ENCODE measurements at regions of chr3 and their contacts with region 1.

Region 1: GRCh38 chr3:50611464-50612233 is at the start of gene CISH:
- DNase-seq: peak; percentile 90 to 94 (median 93)
- H3K4me3 ChIP-seq: peak within 1 kb of the TSS; percentile 93 to 96
- H3K4me3 Mint-ChIP-seq: peak within 1 kb of the TSS; percentile 92 to 99 (median 96)
- H3K27ac ChIP-seq: peak within 1 kb of the TSS; percentile 81
- H3K27ac Mint-ChIP-seq: peak within 1 kb of the TSS; percentile 90 to 97 (median 94)
- H3K4me1 ChIP-seq: peaks cover 66% of the 10 kb centered on the region
- H3K4me1 Mint-ChIP-seq: peaks cover 44 to 80% (median 63%) of the 10 kb centered on the region in 4 donors
- H3K27me3 ChIP-seq: no peaks in the 10 kb centered on the region
- H3K27me3 Mint-ChIP-seq: no peaks in the 10 kb centered on the region
- total RNA-seq, gene CISH: 14.7 to 15.2 TPM

Region 2: GRCh38 chr3:50418850-50419249 is 192.8 kb before region 1 on chr3:
- CTCF ChIA-PET with region 1: no interaction called
- POLR2A ChIA-PET with region 1: no interaction called
- intact Hi-C with region 1: no loop called
- DNase-seq: no peak
- H3K4me3 ChIP-seq: no peak overlapping the region
- H3K4me3 Mint-ChIP-seq: no peak overlapping the region
- H3K27ac ChIP-seq: no peak overlapping the region
- H3K27ac Mint-ChIP-seq: peak overlapping the region in 1 of 7 donors; percentile 53
- H3K4me1 ChIP-seq: no peaks in the 10 kb centered on the region
- H3K4me1 Mint-ChIP-seq: peaks cover 0 to 6% (median 3%) of the 10 kb centered on the region in 4 donors
- H3K27me3 ChIP-seq: no peaks in the 10 kb centered on the region
- H3K27me3 Mint-ChIP-seq: no peaks in the 10 kb centered on the region

Region 3: GRCh38 chr3:50519471-50520089 is 92.1 kb before region 1 on chr3:
- CTCF ChIA-PET with region 1: interaction called, 28 read pairs
- POLR2A ChIA-PET with region 1: no interaction called
- intact Hi-C with region 1: loop called (anchors 1 kb)
- DNase-seq: peak; percentile 58 to 68 (median 66)
- H3K4me3 ChIP-seq: no peak overlapping the region
- H3K4me3 Mint-ChIP-seq: no peak overlapping the region
- H3K27ac ChIP-seq: no peak overlapping the region
- H3K27ac Mint-ChIP-seq: peak overlapping the region in 1 of 7 donors; percentile 17
- H3K4me1 ChIP-seq: peaks cover 4% of the 10 kb centered on the region
- H3K4me1 Mint-ChIP-seq: peaks cover 3 to 10% (median 5%) of the 10 kb centered on the region in 4 donors
- H3K27me3 ChIP-seq: no peaks in the 10 kb centered on the region
- H3K27me3 Mint-ChIP-seq: peaks cover 0 to 5% of the 10 kb centered on the region in 2 donors

Region 4: DNA sequence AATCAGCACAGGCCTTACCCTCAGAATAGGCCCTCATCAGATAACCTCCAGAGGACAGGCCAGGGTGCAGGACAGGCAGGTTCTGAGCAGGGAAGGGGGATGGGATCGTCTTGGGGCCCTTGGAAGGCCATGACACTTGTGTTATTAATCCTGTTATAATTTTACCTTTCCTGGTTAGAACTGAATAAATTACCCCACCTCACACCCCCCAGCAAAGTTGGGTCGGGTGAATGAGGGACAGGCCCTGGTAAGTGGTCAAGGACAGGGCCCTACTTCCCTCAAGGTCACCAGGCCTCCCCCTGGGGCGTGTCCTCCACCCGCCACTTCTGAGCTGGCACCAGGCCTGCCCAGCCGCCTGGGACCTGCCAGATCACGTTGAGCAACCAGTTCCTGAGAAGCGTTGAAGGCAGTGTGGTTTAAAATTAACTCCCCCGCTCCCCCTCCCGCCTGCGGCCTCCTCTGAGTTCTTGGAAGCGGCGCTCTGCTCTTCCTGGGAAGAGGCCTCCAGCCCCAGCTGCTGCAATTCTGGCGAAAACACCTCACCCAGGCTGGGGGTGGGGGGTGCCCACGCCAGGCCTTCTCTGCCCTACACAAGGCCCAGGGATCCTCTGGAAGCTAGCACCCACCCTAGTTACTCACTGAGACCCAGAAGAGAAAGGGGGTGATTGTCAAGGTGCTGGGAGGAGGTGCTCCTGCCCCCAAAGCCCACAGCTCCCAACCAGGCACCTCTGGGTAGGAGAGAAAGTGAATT is 10.6 kb before region 1 on chr3:
- CTCF ChIA-PET with region 1: interaction called, 149 read pairs
- POLR2A ChIA-PET with region 1: interaction called, 156 read pairs
- intact Hi-C with region 1: loop called (anchors 1 kb)
- DNase-seq: peak; percentile 62 to 80 (median 65)
- H3K4me3 ChIP-seq: peak overlapping the region in 1 of 2 donors; percentile 37
- H3K4me3 Mint-ChIP-seq: peak overlapping the region; percentile 75 to 99 (median 84)
- H3K27ac ChIP-seq: peak overlapping the region; percentile 81
- H3K27ac Mint-ChIP-seq: peak overlapping the region; percentile 90 to 99 (median 95)
- H3K4me1 ChIP-seq: peaks cover 79% of the 10 kb centered on the region
- H3K4me1 Mint-ChIP-seq: peaks cover 58 to 83% (median 69%) of the 10 kb centered on the region in 4 donors
- H3K27me3 ChIP-seq: no peaks in the 10 kb centered on the region
- H3K27me3 Mint-ChIP-seq: no peaks in the 10 kb centered on the region

Region 5: GRCh38 chr3:50971487-50971924 is 359.9 kb after region 1 on chr3:
- CTCF ChIA-PET with region 1: interaction called, 12 read pairs
- POLR2A ChIA-PET with region 1: interaction called, 4 read pairs
- intact Hi-C with region 1: loop called (anchors 2 kb)
- DNase-seq: peak; percentile 69 to 78 (median 76)
- H3K4me3 ChIP-seq: no peak overlapping the region
- H3K4me3 Mint-ChIP-seq: peak overlapping the region in 4 of 8 donors; percentile 5 to 57 (median 42)
- H3K27ac ChIP-seq: no peak overlapping the region
- H3K27ac Mint-ChIP-seq: peak overlapping the region in 4 of 7 donors; percentile 59 to 79 (median 72)
- H3K4me1 ChIP-seq: peaks cover 13% of the 10 kb centered on the region
- H3K4me1 Mint-ChIP-seq: peaks cover 11 to 18% (median 14%) of the 10 kb centered on the region in 4 donors
- H3K27me3 ChIP-seq: no peaks in the 10 kb centered on the region
- H3K27me3 Mint-ChIP-seq: no peaks in the 10 kb centered on the region

Region 6: DNA sequence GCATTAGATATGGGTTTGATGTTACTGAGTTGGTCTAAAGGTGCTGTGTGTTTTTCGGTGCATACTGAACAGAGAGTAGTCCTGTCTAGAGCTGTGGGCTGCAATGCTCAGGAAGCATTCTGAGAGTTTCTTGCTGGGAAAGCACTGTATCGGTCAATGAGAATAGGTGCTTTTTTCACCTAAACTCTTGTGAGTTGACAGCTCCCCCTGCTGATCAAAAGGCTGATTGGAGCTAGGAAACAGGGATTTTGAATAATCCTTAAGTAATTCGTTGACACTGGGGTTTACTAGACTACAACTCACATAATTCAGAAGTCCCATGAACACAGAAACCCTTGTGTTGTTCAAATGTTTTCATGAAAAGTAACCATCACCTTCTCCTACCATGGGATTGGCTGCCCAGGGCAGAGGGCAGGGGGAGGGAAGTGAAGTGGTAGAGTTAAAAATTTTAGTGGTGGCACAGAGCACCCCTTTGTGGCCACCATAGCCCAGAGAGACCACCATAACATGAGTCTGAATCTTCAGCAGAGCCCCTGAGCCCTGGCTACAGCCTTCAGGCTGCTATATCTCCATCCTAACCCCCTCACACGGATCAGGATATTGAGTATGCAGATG is 760.4 kb after region 1 on chr3:
- CTCF ChIA-PET with region 1: interaction called, 45 read pairs
- POLR2A ChIA-PET with region 1: interaction called, 10 read pairs
- intact Hi-C with region 1: loop called (anchors 1 kb)
- DNase-seq: peak in 4 of 5 donors; percentile 51 to 58 (median 52)
- H3K4me3 ChIP-seq: no peak overlapping the region
- H3K4me3 Mint-ChIP-seq: no peak overlapping the region
- H3K27ac ChIP-seq: no peak overlapping the region
- H3K27ac Mint-ChIP-seq: no peak overlapping the region
- H3K4me1 ChIP-seq: no peaks in the 10 kb centered on the region
- H3K4me1 Mint-ChIP-seq: peaks cover 0 to 2% (median 0%) of the 10 kb centered on the region in 4 donors
- H3K27me3 ChIP-seq: no peaks in the 10 kb centered on the region
- H3K27me3 Mint-ChIP-seq: peaks cover 2 to 10% of the 10 kb centered on the region in 2 donors

Region 7: GRCh38 chr3:51670823-51671733 is 1059.4 kb after region 1 on chr3 and contains the start of gene TEX264:
- CTCF ChIA-PET with region 1: no interaction called
- POLR2A ChIA-PET with region 1: interaction called, 3 read pairs
- intact Hi-C with region 1: loop called (anchors 2 kb)
- DNase-seq: peak; percentile 95 to 97 (median 96)
- H3K4me3 ChIP-seq: peak within 1 kb of the TSS; percentile 88 to 89
- H3K4me3 Mint-ChIP-seq: peak within 1 kb of the TSS; percentile 88 to 95 (median 92)
- H3K27ac ChIP-seq: peak within 1 kb of the TSS; percentile 83
- H3K27ac Mint-ChIP-seq: peak within 1 kb of the TSS; percentile 95 to 97 (median 97)
- H3K4me1 ChIP-seq: peaks cover 66% of the 10 kb centered on the region
- H3K4me1 Mint-ChIP-seq: peaks cover 54 to 74% (median 63%) of the 10 kb centered on the region in 4 donors
- H3K27me3 ChIP-seq: no peaks in the 10 kb centered on the region
- H3K27me3 Mint-ChIP-seq: no peaks in the 10 kb centered on the region
- total RNA-seq, gene TEX264: 40.0 to 40.9 TPM

Measured in CD4-positive, alpha-beta memory T cell (primary cell).